Right cardiac atrium (tissue), 5 donors: ENCODE measurements at regions of chr5 and their contacts with region 1.

Region 1: DNA sequence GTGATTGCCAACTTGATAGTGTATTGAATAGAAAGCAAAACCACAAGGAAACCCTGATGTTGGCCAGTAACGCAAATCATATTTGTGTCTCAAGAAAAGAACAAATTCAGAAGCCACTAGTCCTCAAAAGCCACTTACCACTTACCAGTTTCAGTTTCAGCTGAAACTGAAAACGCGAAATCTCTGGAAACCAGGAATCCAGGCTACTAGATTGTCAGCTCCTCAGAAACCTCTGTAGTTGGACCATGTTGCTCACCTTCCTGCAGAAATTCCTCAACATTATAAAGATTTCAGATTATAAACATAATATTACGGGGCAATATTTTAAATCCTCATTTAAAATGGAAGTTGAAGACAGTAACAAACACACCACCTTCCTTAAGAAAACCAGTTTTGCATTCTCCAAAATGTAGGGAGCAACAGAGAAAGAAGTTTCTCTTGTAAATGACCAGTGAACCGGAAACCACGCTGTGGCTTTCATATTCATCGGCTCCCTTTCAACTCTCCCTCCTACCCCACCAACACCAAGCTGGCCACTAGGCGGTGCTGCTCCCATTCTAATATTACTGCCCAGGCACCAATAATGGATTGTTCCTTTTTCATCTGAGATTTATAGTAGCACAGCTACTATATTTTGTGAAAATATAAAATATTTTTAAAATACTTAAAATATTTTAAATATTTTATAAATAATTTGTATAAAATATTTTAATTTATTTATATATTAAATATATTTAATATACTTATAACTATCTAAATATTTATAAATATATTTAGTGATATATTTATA is 8.7 kb upstream of the TMED7 start:
- DNase-seq: peak; percentile 90 to 96 (median 92)
- ATAC-seq: peak; percentile 95 to 96
- H3K4me3 ChIP-seq: peak overlapping the region; percentile 59
- H3K27ac ChIP-seq: peak overlapping the region; percentile 75
- H3K4me1 ChIP-seq: no peaks in the 10 kb centered on the region
- H3K27me3 ChIP-seq: no peaks in the 10 kb centered on the region

Region 2: DNA sequence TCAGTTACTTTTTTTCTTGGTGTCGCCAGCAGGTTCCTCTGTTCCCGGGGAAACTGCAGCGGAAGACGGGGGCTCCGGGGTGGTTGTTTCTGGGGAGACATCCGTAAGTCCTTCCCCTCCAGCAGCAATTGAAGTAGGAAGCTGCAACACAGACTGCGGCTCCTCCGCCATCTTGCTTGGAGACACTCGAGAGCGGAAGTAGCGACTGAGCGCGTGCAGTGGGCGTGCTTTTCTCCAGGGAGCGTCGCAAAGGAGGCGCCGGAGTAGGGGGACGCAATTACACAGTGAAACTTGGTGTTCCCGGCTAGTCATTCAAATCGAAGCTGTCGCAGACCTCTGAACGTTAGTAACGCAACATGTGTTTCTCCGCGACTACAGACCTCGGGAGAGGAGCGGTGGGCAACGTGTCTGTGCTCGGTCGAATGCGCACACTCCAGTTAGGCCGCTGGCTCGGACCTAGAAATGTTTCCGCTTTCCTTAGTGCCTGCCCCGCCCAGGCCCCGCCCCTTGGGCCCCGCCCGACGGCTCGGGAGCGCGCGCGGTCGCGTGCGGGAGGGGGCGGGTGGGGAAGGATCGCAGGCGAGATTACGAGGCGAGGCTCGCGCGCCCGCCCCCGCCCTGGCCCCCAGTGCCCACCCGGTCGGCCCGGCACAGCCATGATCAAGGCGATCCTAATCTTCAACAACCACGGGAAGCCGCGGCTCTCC is 207.0 kb after region 1 on chr5 and contains the starts of genes AP3S1 and ATG12:
- intact Hi-C with region 1: loop called in 2 of 4 experiments (anchors 5 kb)
- DNase-seq: peak; percentile 92 to 97 (median 96)
- ATAC-seq: peak; percentile 97
- H3K4me3 ChIP-seq: peak within 1 kb of the TSS; percentile 72
- H3K27ac ChIP-seq: peak within 1 kb of the TSS; percentile 98
- H3K4me1 ChIP-seq: peaks cover 5% of the 10 kb centered on the region
- H3K27me3 ChIP-seq: no peaks in the 10 kb centered on the region
- total RNA-seq, gene AP3S1: 70.9 to 82.2 (median 77.6) TPM
- total RNA-seq, gene ATG12: 25.3 to 31.6 (median 28.8) TPM

Region 3: DNA sequence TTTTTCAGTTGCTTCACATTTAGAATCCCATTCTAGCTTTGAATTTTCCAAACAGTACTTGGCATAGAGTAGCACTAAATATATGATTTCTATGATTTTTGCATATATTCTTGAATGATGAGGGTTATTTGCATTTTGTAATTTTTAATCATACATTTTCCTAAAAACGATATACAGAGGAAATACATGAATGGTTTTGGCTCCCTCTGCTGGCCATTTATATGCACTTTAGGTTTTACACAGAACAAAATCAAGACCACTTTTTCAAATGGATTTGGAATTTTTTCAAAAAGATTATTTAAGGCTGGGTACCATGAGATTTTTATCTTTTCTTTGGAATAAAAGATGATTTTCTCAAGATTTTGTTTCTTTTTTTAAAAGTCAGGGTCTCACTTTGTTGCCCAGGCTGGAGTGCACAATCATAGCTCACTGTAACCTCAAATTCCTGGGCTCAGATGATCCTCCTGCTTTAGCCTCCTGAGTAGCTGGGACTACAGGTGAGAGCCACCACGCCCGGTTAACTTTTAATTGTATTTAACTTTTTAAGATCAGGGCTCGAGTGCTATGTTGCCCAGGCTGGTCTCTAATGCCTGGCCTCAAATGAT is 433.6 kb after region 1 on chr5:
- intact Hi-C with region 1: loop called in 1 of 4 experiments (anchors 5 kb)
- DNase-seq: no peak
- ATAC-seq: no peak
- H3K4me3 ChIP-seq: no peak overlapping the region
- H3K27ac ChIP-seq: no peak overlapping the region
- H3K4me1 ChIP-seq: no peaks in the 10 kb centered on the region
- H3K27me3 ChIP-seq: no peaks in the 10 kb centered on the region